Cardiac septum (tissue), 1 donor: ENCODE measurements at regions of chr10 and their contacts with region 1.

Region 1: DNA sequence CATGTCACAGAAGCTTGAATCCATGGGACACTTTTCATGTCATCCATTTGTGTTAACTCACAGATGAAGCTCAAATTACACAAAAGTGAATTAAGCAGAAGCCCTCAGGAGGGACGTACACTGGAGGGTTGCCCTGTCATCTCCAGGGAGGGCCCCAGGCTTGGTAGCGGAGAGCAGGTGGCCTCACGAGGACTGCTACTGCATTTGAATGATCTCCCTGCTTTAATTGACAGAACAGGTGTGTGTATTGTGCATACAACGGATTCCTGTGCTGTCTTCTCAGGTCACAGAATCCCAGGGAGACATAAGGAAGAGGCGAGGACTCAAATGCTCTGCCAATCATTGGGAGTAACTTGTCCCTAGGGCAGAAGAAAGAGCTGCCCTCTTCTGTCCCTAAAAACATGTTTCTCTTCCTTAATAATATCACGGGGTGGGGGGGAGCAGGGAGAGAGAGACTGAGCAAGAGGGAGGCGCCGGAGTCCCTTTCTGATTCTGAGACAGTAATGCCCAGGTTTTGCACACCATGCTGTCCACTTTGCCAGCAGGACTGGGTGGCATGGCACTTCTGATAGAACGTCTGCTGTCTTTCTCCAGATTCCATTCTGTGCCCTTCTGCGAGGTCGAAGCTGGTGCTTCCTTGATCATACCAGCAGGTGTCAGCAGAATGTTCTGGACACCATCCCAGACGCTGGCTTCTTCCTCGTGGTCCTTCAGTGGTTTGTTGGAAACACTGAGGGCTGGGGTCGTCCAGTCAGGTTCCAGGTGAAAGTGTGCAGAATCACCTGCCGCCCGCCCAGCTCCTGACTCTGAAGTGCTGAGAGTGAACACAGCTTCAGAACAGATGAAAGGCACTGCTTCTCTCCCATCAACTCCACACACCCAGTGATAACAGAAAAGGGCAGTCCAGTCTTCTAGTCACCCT is 26.2 kb upstream of the RASGEF1A start:
- DNase-seq: no peak

Region 2: DNA sequence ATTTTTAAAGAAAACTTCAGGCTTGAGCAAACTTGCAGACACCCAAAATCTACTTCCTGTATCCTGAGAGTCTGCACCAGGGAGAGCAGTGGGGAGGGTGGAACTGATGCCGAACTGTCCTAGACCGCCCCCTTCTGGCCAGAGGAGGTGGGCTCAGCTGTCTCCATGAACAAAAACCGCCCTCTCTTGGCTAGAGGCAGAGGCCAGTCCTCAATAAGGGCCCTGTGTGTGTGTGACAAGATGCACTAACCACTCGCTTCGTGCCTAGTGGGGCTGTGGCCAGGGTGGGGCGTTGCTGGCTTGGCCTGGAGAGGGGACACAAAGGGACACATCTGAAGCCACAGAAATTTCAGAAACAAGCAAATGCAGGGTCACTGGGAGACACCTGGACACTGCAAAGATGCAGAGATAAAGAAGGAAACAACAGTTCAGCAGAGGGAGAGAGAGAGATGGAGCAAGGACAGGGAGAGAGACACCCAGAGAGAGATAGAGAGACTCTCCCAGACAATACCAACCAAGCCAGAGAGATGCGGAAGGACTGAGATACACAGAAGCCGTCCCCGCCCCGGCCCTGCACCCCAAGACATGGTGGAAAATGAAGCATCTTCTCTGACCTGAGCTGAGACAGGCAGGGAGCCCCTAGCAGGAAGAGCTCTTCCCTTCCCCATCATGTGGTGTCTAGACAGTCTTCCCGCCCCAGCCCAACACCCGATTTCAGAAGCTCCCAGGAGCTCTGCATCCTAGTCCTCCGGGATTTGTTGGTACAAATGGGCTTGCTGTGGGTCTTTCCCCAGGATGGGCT is 55.7 kb after region 1 on chr10:
- intact Hi-C with region 1: loop called (anchors 2 kb)
- DNase-seq: peak; percentile 93

Region 3: GRCh38 chr10:43461950-43462349 is 168.9 kb after region 1 on chr10:
- intact Hi-C with region 1: loop called (anchors 1 kb)
- DNase-seq: no peak

Region 4: DNA sequence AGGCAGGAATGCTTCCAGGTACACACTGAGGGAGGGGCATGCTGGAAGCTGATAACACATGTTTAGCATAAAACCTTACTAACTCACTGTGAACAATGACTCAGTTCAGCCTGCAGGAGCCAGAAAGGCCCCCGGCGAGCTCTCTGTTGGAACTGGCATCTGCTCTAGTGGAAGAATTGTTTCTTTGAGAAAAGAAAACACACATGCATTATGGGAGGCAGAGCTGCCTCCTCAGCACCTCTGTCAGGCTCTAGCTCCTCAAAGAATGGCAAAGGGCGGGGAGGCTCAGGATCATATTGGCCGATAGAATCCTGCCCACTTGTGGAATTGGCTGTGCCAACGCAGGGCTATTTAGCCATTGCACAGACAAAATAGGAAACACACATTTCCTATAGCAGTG is 753.6 kb after region 1 on chr10:
- intact Hi-C with region 1: no loop called
- DNase-seq: no peak